CD4-positive, alpha-beta T cell (primary cell): ENCODE measurements at regions of chr10 and their contacts with region 1.

Region 1: DNA sequence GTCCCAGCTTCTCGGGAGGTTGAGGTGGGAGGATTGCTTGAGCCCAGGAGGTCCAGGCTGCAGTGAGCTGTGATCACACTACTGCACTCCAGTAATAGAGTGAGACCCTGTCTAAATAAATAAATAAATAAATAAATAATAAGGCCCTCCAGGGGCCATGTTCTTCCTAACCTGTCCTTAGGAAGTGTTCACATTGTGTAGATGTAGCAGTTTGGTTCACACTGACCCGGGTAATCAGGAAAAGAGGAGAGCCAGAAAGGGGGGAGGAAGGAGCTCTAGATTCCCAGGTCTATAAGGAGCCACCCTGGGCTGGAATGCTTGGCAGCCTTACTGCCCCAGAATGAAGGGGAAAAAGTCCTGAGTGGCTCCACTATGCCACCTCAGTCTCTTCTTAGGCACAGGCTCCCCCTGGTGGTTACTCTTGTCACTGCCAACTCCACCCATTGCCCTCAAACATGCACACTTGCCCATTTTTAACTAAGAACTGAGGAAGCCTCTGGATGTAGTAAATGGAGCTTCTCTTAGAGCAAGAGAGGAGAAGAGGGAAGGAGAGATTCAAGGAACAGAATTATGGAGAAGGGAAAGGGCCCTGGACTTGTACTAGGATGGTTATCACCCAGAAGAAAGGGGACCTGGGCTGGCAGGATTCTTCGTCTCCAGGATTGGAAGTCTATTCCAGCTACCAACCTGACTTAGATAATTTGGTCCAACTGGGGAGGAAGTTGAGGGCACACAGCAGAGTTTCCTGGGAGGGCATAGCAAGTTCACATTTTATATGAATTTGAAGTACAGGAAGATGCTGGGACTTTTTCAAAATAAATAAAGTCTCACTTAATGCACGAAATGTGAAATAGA is 7.8 kb downstream of the HPS6 start:
- DNase-seq: peak; percentile 68 to 88 (median 76)
- ATAC-seq: peak; percentile 98
- H3K4me3 ChIP-seq: no peak overlapping the region
- H3K4me3 Mint-ChIP-seq: no peak overlapping the region
- H3K27ac ChIP-seq: no peak overlapping the region
- H3K27ac Mint-ChIP-seq: no peak overlapping the region
- H3K4me1 ChIP-seq: peaks cover 11% of the 10 kb centered on the region
- H3K4me1 Mint-ChIP-seq: no peaks in the 10 kb centered on the region
- H3K27me3 ChIP-seq: no peaks in the 10 kb centered on the region
- H3K27me3 Mint-ChIP-seq: no peaks in the 10 kb centered on the region
- CTCF ChIP-seq: peak; percentile 81

Region 2: DNA sequence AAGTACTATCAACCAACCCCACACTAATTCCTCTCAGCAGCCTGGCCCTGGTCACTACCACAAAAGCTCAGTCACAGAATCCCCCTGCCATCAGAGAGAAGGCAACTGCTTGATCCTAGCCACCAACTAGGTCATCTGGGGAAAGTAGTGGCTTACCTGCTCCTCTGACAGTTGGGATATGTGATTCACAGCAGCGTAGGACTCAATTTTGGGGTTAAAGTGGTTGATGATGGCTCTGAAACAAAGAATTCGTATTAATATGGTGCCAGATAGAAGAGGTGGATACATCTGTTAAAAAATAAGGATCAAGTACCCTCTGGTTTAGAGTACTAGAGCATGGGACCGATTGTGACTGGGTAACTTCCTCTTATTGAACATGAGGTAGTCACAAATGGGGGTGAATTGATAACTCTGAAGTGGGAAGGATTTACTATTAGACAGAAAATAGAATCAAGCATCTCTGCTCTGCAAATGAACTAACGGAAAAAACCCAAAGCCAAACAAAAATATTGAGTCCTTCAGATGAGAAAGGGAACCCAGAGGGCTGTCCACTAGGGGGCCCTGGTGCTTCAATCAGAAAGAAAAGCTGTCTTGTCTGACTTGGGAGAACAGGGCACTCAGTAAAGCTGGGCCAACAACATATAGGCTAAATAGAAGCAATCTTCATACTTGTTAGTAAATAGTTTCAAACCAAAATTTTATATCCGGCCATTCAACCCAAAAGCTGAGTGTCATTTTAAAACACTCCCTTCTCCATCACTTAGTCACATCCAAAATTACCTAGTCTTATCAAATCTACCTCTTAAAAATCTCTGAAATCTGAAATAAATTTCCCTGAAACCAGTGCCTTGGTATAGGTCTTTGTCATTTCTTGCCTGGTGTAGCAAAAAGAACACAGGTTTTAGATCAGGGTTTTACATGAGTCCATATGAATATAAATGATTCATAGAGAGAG is 183.4 kb before region 1 on chr10:
- CTCF ChIA-PET with region 1: interaction called, 4 read pairs
- POLR2A ChIA-PET with region 1: interaction called, 3 read pairs
- intact Hi-C with region 1: loop called (anchors 1 kb)
- DNase-seq: peak; percentile 42 to 74 (median 62)
- ATAC-seq: peak; percentile 56
- H3K4me3 ChIP-seq: no peak overlapping the region
- H3K4me3 Mint-ChIP-seq: no peak overlapping the region
- H3K27ac ChIP-seq: no peak overlapping the region
- H3K27ac Mint-ChIP-seq: no peak overlapping the region
- H3K4me1 ChIP-seq: no peaks in the 10 kb centered on the region
- H3K4me1 Mint-ChIP-seq: no peaks in the 10 kb centered on the region
- H3K27me3 ChIP-seq: no peaks in the 10 kb centered on the region
- H3K27me3 Mint-ChIP-seq: no peaks in the 10 kb centered on the region
- CTCF ChIP-seq: peak; percentile 79

Region 3: DNA sequence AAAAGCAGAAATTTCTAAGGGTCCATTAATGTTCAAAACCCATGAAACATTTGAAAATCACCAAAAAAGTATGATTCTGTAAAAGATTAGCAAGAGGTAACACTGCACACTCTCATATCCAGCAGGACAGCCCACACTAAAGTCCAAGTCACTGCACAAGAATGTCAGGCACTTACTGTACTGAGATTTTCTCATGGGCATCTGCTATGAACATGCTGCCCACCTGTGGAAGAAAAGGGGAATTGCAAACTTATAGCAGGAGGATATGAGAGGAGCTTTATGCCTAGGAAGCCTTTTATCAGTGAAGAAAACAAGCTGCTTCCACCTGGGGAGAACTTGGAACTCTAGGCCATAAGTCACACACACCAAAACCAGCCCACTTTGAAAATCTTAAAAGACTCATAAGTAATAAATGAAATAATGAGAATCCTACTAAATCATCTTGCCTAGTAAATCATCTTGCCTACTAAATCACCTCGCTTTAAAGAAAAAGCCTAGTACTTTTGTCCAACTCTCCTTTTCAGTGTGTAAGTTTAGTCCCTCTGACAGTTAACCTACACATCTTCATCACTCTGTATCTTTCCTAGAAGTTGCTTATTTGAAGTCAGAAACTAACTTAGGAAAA is 63.0 kb before region 1 on chr10:
- CTCF ChIA-PET with region 1: interaction called, 11 read pairs
- POLR2A ChIA-PET with region 1: no interaction called
- intact Hi-C with region 1: loop called (anchors 1 to 2 kb)
- DNase-seq: peak in 10 of 14 experiments; percentile 2 to 74 (median 23)
- ATAC-seq: peak; percentile 91
- H3K4me3 ChIP-seq: no peak overlapping the region
- H3K4me3 Mint-ChIP-seq: no peak overlapping the region
- H3K27ac ChIP-seq: no peak overlapping the region
- H3K27ac Mint-ChIP-seq: peak overlapping the region; percentile 0
- H3K4me1 ChIP-seq: no peaks in the 10 kb centered on the region
- H3K4me1 Mint-ChIP-seq: peaks cover 5% of the 10 kb centered on the region
- H3K27me3 ChIP-seq: no peaks in the 10 kb centered on the region
- H3K27me3 Mint-ChIP-seq: no peaks in the 10 kb centered on the region
- CTCF ChIP-seq: peak; percentile 74

Region 4: DNA sequence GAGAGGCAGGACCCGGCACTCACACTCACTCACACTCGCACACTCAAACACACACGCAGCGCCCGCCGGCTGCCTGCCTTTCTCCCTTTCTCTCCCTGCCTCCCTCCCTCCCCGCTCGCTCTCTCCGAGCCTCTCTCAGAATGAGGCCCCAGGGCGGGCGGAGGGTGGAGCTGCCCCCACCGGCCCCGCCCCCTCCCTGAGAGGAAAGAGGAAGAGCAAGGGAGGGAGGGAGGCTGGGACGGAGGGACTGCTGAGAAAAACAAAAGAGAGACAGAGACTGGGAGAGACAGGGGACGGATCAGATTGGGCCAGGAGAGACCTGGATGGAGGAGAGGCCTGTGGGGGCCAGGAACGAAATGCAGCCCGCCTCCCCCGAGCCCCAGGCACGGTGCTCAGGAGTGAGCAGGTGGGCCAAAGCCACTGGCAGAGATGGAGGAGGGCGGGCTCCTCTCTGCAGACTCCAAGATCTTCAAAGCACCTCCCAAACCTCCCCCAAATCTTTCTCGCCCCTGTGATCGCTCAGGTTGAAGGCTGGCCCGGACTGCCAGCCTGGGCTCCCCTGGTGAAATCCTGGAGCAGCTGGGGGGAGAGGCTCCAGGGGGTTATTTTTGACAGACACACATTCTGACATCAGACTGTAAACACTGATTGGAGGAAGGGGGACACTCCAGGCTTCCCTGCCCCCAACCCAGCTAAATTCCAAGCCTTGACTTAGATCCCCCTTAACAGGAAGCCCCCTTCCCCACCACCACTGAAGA is 42.1 kb after region 1 on chr10:
- CTCF ChIA-PET with region 1: interaction called, 4 read pairs
- POLR2A ChIA-PET with region 1: interaction called, 3 read pairs
- intact Hi-C with region 1: loop called (anchors 2 to 5 kb)
- DNase-seq: peak; percentile 65 to 90 (median 84)
- ATAC-seq: peak; percentile 60
- H3K4me3 ChIP-seq: peak overlapping the region; percentile 58
- H3K4me3 Mint-ChIP-seq: peak overlapping the region; percentile 89
- H3K27ac ChIP-seq: peak overlapping the region; percentile 76 to 96
- H3K27ac Mint-ChIP-seq: peak overlapping the region; percentile 89
- H3K4me1 ChIP-seq: peaks cover 77% of the 10 kb centered on the region
- H3K4me1 Mint-ChIP-seq: peaks cover 73% of the 10 kb centered on the region
- H3K27me3 ChIP-seq: no peaks in the 10 kb centered on the region
- H3K27me3 Mint-ChIP-seq: no peaks in the 10 kb centered on the region
- CTCF ChIP-seq: no peak

Region 5: GRCh38 chr10:102757323-102757722 is 684.4 kb after region 1 on chr10:
- CTCF ChIA-PET with region 1: no interaction called
- POLR2A ChIA-PET with region 1: no interaction called
- intact Hi-C with region 1: no loop called
- DNase-seq: no peak
- ATAC-seq: no peak
- H3K4me3 ChIP-seq: no peak overlapping the region
- H3K4me3 Mint-ChIP-seq: no peak overlapping the region
- H3K27ac ChIP-seq: no peak overlapping the region
- H3K27ac Mint-ChIP-seq: peak overlapping the region; percentile 51
- H3K4me1 ChIP-seq: peaks cover 24% of the 10 kb centered on the region
- H3K4me1 Mint-ChIP-seq: peaks cover 42% of the 10 kb centered on the region
- H3K27me3 ChIP-seq: no peaks in the 10 kb centered on the region
- H3K27me3 Mint-ChIP-seq: no peaks in the 10 kb centered on the region
- CTCF ChIP-seq: no peak